Mammary epithelial cell (primary cell): ENCODE measurements at regions of chr17 and their contacts with region 1.

Region 1: GRCh38 chr17:17356149-17356930 is 53.2 kb downstream of the NT5M start:
- DNase-seq: peak; percentile 64
- H3K4me3 ChIP-seq: no peak overlapping the region
- H3K27ac ChIP-seq: no peak overlapping the region
- H3K4me1 ChIP-seq: no peaks in the 10 kb centered on the region
- H3K27me3 ChIP-seq: no peaks in the 10 kb centered on the region
- CTCF ChIP-seq: peak; percentile 100

Region 2: DNA sequence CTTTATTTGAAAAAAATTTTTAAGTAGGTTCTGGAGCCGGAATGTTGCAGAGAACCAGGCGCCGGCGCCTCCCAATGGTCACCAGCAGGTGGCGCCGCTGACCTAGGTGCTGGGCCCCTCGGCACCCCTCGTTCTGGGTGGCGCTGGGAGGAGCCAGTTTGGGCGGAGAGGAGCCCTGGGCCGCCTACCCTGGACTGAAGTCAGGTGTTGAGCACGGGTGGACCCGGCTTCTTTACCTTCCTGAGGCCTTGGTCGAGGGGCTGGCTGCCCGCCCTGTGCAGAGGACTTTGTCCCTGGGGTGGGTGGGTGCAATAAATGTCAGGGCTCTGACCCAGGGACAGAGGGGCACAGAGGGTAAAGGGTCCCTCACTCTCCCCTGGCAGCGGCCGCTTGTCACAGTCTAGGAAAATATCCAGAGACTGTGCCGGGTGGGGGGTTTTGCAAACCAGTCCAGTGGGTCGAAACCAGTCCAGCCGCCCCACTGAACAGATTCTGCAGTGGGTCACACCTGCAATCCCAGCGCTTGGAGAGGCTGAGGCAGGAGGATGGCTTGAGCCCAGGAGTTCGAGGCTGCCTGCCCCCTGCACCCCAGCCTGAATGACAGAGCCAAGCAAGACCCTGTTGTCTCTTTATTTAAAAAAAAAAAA is 354.3 kb before region 1 on chr17:
- CTCF ChIA-PET with region 1: no interaction called
- dilution Hi-C with region 1: no loop called
- in situ Hi-C with region 1: no loop called
- intact Hi-C with region 1: loop called (anchors 2 kb)
- DNase-seq: peak; percentile 55
- H3K4me3 ChIP-seq: no peak overlapping the region
- H3K27ac ChIP-seq: no peak overlapping the region
- H3K4me1 ChIP-seq: no peaks in the 10 kb centered on the region
- H3K27me3 ChIP-seq: no peaks in the 10 kb centered on the region
- CTCF ChIP-seq: peak; percentile 83 to 96

Region 3: GRCh38 chr17:17440010-17440843 is 83.9 kb after region 1 on chr17:
- CTCF ChIA-PET with region 1: no interaction called
- dilution Hi-C with region 1: no loop called
- in situ Hi-C with region 1: no loop called
- intact Hi-C with region 1: loop called (anchors 1 kb)
- DNase-seq: peak; percentile 23
- H3K4me3 ChIP-seq: no peak overlapping the region
- H3K27ac ChIP-seq: no peak overlapping the region
- H3K4me1 ChIP-seq: no peaks in the 10 kb centered on the region
- H3K27me3 ChIP-seq: no peaks in the 10 kb centered on the region
- CTCF ChIP-seq: peak; percentile 70 to 82

Region 4: GRCh38 chr17:17575360-17576251 is 219.3 kb after region 1 on chr17:
- CTCF ChIA-PET with region 1: no interaction called
- dilution Hi-C with region 1: no loop called
- in situ Hi-C with region 1: loop called (anchors 5 to 10 kb)
- intact Hi-C with region 1: no loop called
- DNase-seq: peak; percentile 24
- H3K4me3 ChIP-seq: no peak overlapping the region
- H3K27ac ChIP-seq: no peak overlapping the region
- H3K4me1 ChIP-seq: peaks cover 14% of the 10 kb centered on the region
- H3K27me3 ChIP-seq: no peaks in the 10 kb centered on the region
- CTCF ChIP-seq: no peak

Region 5: DNA sequence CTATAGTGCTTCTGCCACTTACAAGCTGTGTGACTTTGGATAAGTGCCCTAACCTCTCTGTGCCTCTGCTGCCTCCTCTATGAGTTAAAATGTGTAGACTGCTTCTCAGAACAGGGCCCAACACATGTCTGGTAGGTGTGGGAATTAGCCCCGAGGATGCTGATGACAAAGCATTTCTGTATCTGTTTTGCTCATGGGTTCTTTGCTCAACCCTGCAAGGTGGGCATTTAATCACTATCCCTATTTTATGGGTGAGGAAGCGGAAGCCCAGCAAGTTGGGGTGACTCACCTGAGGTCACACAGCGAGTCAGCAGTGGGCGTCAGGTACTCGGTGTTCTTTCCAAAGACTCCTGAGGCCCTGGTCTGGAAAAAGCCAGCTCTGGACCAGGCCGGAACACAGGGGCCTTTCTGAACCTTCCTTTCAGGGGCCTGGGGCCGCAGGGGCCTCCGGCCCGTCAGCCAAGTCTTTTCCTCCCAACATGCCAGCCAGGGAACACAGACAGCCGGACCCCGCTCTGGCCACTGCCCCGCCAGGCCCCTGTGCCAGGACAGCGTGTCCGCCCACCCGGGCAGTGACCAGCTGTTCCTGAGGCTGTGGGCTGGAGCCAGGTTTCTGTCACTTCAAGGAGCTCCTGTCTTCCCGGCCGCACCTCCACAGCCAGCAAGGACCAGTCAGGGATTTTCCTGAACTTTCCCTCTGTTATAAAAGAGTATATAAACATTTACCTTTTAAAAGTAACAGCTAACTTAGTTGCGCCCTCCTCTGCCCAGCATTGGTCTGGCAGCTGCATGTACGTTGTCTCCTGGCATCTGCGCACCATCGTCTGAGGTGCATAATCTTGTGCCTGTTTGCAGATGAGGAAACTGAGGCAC is 417.9 kb after region 1 on chr17:
- CTCF ChIA-PET with region 1: no interaction called
- dilution Hi-C with region 1: no loop called
- in situ Hi-C with region 1: loop called in 1 of 2 experiments (anchors 25 kb)
- intact Hi-C with region 1: loop called (anchors 1 kb)
- DNase-seq: peak; percentile 97
- H3K4me3 ChIP-seq: peak overlapping the region in 1 of 3 experiments; percentile 19
- H3K27ac ChIP-seq: peak overlapping the region; percentile 98
- H3K4me1 ChIP-seq: peaks cover 23% of the 10 kb centered on the region
- H3K27me3 ChIP-seq: no peaks in the 10 kb centered on the region
- CTCF ChIP-seq: peak; percentile 67 to 77

Region 6: DNA sequence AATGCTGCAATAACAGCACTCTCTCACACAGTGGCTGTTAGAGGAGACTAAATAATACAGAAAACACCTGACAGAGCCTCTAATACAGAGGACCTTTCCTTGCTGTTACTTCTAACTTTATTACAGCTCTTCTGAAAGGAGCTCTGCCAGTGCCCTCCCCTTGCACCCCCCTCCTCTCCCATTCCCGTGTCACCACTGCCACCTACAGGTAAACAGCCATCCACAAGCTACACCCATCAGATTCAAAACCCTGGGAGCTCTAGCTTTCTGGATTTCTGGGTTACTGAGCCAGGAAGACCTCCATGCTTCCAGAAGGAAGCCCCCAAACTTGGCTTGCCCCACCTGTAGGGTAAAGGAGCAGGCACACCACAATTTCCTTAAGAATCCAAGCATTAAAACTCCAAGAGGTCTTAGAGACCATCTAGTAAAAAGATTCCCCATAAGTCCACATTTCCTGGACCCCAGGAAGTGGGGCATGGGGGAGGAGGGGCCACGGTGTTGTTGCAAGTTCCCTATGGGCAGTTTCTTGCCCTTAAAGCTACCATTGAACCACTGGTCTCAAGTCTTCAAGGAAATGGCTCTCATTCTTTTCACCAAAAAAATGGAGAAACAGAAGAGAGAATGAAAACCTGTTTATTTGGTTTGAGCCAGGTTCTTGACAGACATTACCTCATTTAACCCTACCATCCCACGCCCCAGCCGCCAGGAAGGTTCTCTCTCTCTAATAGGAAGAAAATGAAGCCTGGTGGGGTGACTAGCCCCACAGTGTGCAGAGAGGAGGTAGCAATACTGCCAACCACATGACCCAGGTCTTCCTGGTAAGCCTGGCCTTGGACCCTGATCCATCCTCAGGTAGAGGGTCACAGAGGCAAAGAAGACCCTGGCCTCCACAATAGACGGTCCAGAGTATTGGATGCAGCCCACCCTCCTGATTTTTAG is 563.1 kb after region 1 on chr17:
- CTCF ChIA-PET with region 1: interaction called, 4 read pairs
- dilution Hi-C with region 1: no loop called
- in situ Hi-C with region 1: no loop called
- intact Hi-C with region 1: loop called (anchors 10 kb)
- DNase-seq: peak; percentile 61
- H3K4me3 ChIP-seq: no peak overlapping the region
- H3K27ac ChIP-seq: peak overlapping the region; percentile 84
- H3K4me1 ChIP-seq: peaks cover 59% of the 10 kb centered on the region
- H3K27me3 ChIP-seq: no peaks in the 10 kb centered on the region
- CTCF ChIP-seq: peak; percentile 88 to 94